Cardiac septum (tissue), 1 donor: ENCODE measurements at regions of chr9 and their contacts with region 1.

Region 1: GRCh38 chr9:134455934-134456739 is 129.9 kb downstream of the RXRA start:
- DNase-seq: peak; percentile 90

Region 2: GRCh38 chr9:134024828-134025605 is 431.1 kb before region 1 on chr9 and contains the start of gene BRD3OS:
- intact Hi-C with region 1: no loop called
- DNase-seq: peak; percentile 98
- total RNA-seq, gene BRD3OS: 9.0 TPM

Region 3: GRCh38 chr9:134443168-134444037 is 12.7 kb before region 1 on chr9:
- intact Hi-C with region 1: no loop called
- DNase-seq: peak; percentile 93

Region 4: GRCh38 chr9:134473141-134474054 is 17.3 kb after region 1 on chr9:
- intact Hi-C with region 1: loop called (anchors 2 kb)
- DNase-seq: no peak

Region 5: GRCh38 chr9:134503301-134504105 is 47.4 kb after region 1 on chr9:
- intact Hi-C with region 1: no loop called
- DNase-seq: peak; percentile 69

Region 6: DNA sequence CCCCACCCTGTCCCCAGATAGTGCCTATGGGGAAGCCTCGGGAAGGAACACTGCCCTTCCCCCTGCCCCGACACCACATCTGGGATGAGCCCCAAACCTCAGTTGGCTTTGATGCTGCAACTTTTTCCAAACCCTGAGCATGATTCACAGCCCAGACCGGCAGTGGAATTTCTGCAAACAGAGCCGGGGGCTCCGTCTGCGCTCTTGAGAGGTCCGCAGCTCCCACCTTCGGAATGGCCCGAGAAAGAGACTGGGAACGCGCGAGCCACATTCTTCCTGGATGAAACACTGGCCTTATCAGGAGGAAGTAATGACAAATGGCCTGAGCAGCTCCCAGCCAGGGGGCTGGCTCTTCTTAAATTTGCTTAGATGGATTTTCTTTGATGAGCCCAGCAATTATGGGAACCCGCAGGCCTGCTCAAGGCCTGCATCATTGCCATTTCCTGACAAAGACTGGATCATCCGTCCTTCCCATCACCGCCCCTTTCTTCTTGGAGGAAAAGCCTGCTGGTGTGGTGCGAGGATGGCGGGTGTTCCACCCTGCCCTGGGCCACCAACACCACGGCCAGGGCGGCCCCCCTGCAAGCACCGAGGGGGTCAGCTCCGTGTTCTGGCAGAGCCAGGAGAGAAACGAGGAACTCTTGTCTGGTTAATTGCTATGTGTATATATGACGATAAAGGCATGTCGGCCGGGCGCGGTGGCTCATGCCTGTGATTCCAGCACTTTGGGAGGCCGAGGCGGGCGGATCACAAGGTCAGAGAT is 146.6 kb after region 1 on chr9:
- intact Hi-C with region 1: loop called (anchors 5 kb)
- DNase-seq: peak; percentile 81

Region 7: DNA sequence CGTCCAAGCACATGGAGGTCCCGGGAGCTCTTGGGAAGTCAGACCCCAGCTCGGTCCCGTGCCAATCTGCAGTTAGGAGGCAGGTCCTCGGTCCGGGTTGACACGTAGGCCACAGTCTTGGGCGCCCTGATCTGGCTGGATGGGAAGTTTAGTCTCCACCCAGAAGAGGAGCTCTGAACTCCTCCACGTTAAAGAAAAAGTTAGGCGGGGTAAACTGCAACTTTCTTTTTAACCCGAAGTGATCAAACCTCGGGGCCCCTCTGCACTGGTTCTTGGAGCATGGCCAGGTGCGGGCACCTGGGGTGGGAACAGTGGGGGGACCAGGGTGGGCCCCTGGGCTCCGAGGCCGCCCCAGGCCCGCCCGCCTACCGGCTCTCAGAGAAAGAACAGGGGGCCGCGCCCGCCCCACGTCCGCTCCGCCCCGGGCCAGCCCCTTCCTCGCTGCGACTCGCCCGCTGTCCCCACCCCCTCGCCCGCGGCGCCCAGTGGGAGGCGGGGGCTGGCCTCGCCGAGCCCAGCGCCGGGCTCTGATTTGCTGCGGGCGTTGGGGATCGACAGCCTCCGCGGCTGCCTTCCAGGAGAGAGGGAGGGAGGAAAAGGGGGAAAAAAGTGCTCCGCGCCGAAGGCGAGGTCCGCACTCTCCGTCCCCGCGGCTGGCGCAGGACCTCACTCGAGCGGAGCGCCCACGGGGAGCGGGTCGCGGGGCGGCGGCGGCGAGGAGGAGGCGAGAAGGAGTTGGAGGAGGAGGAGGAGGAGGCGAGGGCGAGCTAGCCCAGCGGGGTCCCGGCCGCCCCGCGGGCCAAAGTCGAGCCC is 185.2 kb after region 1 on chr9 and contains the start of gene COL5A1:
- intact Hi-C with region 1: loop called (anchors 5 kb)
- DNase-seq: peak; percentile 91
- total RNA-seq, gene COL5A1: 21.6 TPM

Region 8: DNA sequence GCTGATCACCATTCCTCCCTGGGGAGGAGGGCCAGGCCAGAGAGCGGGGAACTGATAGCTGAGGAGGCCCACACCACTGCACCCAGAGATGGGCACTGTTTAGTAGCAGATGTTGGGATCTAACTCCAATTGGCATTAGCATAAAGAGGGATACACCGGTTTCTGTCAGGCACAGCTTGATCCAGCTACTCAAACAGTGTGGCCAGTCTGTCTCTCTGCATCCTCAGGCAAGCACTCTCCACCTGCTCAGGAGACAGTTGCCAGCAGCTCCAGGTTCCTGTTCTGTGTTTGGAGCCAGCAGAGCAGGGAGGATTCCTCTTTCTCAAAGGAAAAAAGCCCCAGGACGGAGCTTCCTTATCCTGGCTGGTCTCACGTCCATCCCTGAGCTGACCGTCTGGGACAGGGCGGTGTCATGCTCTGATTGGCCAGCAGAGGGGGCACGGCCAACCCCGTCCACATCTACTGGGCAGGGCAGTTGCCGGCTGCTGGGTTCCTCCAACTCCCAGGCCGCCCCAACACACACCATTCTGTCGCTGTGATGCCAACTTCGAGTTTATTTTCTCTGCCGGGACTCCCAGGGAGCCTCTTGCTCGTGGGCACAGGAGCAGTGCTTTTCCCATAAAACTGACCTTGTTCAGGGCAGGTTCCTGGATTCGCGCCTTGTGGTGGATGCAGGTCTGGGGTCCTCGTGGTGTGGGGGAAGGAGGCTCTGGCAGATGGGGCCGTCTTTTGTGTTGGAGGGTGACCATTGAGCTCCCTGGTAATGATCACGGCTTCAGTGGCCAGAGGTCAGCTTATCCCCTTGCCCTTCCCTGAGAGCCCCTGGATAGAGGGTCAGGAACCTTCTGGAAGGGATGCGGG is 233.4 kb after region 1 on chr9:
- intact Hi-C with region 1: loop called (anchors 5 kb)
- DNase-seq: peak; percentile 84